Common myeloid progenitor, CD34-positive (primary cell): ENCODE measurements at regions of chr6 and their contacts with region 1.

Region 1: GRCh38 chr6:29649701-29650673 is 6.9 kb upstream of the MOG start:
- DNase-seq: peak; percentile 98 to 99 (median 99)
- H3K4me3 ChIP-seq: peak overlapping the region; percentile 50 to 95 (median 82)
- H3K27ac ChIP-seq: peak overlapping the region; percentile 89 to 92
- H3K4me1 ChIP-seq: peaks cover 3 to 12% (median 8%) of the 10 kb centered on the region in 4 experiments
- H3K27me3 ChIP-seq: peaks cover 0 to 4% (median 0%) of the 10 kb centered on the region in 5 experiments

Region 2: GRCh38 chr6:29632789-29633533 is 17.0 kb before region 1 on chr6 and contains the start of gene GABBR1:
- CTCF ChIA-PET with region 1: interaction called, 24 read pairs
- POLR2A ChIA-PET with region 1: interaction called, 3 read pairs
- DNase-seq: peak; percentile 57 to 76 (median 65)
- H3K4me3 ChIP-seq: peak within 1 kb of the TSS; percentile 44 to 82 (median 64)
- H3K27ac ChIP-seq: peak within 1 kb of the TSS in 1 of 2 experiments; percentile 34
- H3K4me1 ChIP-seq: peaks cover 6 to 43% (median 27%) of the 10 kb centered on the region in 4 experiments
- H3K27me3 ChIP-seq: peaks cover 0 to 26% (median 0%) of the 10 kb centered on the region in 5 experiments

Region 3: GRCh38 chr6:29665942-29666825 is 16.2 kb after region 1 on chr6:
- CTCF ChIA-PET with region 1: interaction called, 65 read pairs
- POLR2A ChIA-PET with region 1: no interaction called
- DNase-seq: no peak
- H3K4me3 ChIP-seq: no peak overlapping the region
- H3K27ac ChIP-seq: no peak overlapping the region
- H3K4me1 ChIP-seq: no peaks in the 10 kb centered on the region
- H3K27me3 ChIP-seq: peaks cover 2 to 12% (median 6%) of the 10 kb centered on the region in 5 experiments

Region 4: DNA sequence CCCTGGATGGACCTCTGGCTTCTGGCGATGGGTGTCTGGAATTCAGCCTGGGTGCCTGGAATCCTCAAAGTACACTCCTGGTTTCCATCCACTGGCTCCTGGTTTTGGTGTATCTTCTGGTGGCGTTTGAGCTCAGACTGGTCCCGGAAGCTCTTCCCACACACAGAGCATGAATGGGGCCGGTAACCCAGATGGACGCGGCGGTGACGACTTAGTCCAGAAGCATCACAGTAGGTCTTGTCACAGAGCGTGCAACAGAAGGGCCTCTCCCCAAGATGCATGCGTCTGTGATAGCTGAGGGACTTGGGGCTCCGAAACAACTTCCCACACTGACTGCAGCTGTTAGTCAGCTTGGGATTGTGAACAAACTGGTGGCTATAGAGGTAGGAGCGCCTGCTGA is 23.2 kb after region 1 on chr6:
- CTCF ChIA-PET with region 1: interaction called, 15 read pairs
- POLR2A ChIA-PET with region 1: interaction called, 6 read pairs
- DNase-seq: no peak
- H3K4me3 ChIP-seq: no peak overlapping the region
- H3K27ac ChIP-seq: no peak overlapping the region
- H3K4me1 ChIP-seq: peaks cover 0 to 10% (median 7%) of the 10 kb centered on the region in 4 experiments
- H3K27me3 ChIP-seq: peaks cover 2 to 9% (median 2%) of the 10 kb centered on the region in 5 experiments

Region 5: DNA sequence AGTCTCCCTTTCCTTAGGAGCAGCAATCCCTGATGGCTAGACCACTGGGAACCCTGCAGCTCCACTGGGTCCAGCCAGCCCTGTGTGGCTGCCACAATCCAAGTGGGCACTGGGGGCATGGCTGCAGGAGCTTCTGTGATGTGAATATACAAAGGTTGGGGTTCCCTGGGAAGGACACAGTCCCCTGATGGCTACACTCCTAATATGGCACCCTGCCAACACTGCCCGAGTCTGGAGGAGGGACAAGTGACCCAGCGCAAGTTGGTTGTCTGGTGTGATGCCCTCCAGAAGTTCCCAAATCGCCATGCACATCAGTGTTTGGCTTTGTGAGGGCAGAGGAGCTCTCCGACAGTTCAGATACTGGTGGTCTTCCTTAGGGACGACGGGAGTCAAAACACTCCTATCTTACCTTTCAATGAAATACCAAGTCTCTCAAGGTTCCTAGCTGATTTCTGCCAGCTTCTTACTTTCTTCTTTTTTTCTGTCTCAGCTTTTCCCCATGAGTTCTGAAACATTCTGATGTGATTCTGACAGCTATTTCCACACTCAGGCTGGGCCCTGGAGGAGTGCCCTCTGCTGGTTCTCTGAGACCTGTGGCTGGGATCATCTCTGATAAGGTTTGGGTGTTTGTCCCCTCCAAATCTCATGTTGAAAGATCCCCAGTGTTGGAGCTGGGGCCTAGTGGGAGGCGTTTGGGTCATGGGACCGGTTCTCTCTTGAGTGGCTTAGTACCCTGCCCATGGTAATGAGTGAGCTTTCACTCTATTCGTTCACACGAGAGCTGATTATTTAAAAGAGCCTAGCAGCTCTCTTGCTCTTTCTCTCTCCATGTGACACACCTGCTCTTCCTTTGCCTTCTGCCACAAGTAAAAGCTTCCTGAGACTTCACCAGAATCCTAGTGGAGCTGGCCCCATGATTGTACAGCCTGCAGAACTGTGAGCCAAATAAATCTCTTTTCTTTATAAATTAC is 46.5 kb after region 1 on chr6:
- CTCF ChIA-PET with region 1: interaction called, 31 read pairs
- POLR2A ChIA-PET with region 1: interaction called, 3 read pairs
- DNase-seq: peak in 2 of 3 donors; percentile 55 to 62
- H3K4me3 ChIP-seq: no peak overlapping the region
- H3K27ac ChIP-seq: no peak overlapping the region
- H3K4me1 ChIP-seq: peaks cover 0 to 5% (median 0%) of the 10 kb centered on the region in 4 experiments
- H3K27me3 ChIP-seq: no peaks in the 10 kb centered on the region